ENCODE measurements at regions of chr12 and their contacts with region 1.

Region 1: DNA sequence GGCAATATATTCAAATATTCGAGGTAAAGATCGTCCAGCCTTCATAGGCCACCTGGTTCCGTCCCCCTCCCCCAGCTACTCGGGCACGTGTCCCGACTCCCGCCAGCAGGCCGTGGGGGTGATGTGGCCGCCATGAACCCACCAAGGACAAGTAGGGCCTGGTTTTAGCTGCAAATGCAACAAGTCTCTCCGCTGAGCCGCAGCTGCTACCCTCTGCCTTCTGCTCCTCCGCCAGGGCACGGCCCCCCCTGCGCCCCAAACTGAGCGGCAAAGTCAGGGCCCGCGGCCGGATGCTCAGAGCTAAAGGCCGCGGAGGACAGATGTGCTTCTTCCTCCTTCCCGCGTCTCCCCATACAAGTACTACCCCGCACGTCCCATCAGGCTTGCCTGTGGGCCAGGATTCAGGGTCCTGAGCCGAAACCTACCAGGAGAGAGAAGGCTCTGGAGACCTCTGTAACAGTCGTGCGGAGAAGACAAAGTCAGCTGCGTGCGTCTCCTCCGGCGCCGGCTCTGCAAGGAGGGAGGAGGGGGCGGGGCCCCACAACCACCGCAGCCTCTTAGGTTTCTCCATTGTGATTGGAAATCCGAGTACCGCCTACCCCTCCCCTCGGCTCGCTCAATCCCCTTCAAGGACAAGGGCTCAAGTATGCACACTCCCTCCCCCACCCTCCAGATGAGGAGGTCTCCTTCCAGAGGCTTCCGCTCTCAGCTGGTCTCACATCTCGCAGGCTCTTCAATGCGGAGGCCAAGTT is at the start of gene LDHB:
- DNase-seq: peak; percentile 72
- ATAC-seq: peak; percentile 97
- H3K4me3 Mint-ChIP-seq: peak within 1 kb of the TSS; percentile 99
- H3K27ac Mint-ChIP-seq: peak within 1 kb of the TSS; percentile 97
- H3K4me1 Mint-ChIP-seq: peaks cover 24% of the 10 kb centered on the region
- H3K27me3 Mint-ChIP-seq: peaks cover 3% of the 10 kb centered on the region
- CTCF ChIP-seq: no peak
- total RNA-seq, gene LDHB: 385 and 440 TPM in 2 replicates

Region 2: DNA sequence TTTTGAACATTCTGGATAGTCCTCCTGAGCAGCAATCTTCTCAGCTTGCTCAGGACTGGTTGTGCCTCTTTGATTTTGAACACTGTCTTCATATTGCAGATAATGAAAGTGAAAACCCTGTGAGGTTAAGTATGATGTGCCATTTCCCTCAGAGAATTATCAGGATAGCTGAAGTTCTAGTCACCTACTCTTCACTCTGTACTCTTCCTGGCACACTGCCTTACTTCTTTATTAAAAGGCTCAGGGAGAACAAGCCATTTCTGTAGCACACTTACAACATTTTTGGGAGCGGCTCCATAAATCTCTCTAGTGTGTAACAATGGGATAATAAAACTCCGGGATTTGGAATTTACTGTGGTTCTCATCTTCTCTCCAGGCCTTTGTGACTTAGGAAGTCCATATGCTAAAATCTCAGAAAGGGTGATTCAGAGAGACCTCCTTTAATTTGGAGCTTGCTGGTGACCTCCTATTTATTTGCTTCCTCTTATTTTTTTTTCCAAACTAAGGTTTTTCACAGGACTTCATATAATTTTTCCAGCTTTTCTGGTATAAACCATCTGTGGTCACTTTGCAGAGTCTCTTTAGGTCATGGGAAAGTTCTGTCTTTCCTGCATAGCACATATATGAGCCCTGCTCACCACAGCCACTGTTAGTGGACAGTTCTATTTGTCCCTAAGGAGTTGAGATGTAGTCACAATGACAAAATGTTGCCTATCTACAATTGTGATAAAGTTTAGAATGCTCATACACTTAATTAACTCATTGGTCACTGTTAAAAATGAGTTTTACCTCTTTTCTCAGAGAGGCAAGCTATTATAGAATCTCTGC is 53.7 kb after region 1 on chr12:
- CTCF ChIA-PET with region 1: no interaction called
- POLR2A ChIA-PET with region 1: no interaction called
- intact Hi-C with region 1: no loop called
- DNase-seq: no peak
- ATAC-seq: no peak
- H3K4me3 Mint-ChIP-seq: no peak overlapping the region
- H3K27ac Mint-ChIP-seq: no peak overlapping the region
- H3K4me1 Mint-ChIP-seq: no peaks in the 10 kb centered on the region
- H3K27me3 Mint-ChIP-seq: peaks cover 2% of the 10 kb centered on the region
- CTCF ChIP-seq: no peak

Region 3: GRCh38 chr12:22046090-22046967 is 388.8 kb after region 1 on chr12 and contains the start of gene CMAS:
- CTCF ChIA-PET with region 1: no interaction called
- POLR2A ChIA-PET with region 1: no interaction called
- intact Hi-C with region 1: loop called (anchors 2 kb)
- DNase-seq: peak; percentile 62
- ATAC-seq: peak; percentile 91
- H3K4me3 Mint-ChIP-seq: peak within 1 kb of the TSS; percentile 94
- H3K27ac Mint-ChIP-seq: peak within 1 kb of the TSS; percentile 81
- H3K4me1 Mint-ChIP-seq: peaks cover 15% of the 10 kb centered on the region
- H3K27me3 Mint-ChIP-seq: peaks cover 1% of the 10 kb centered on the region
- CTCF ChIP-seq: no peak
- total RNA-seq, gene CMAS: 15.8 and 16.2 TPM in 2 replicates